CD4-positive, alpha-beta T cell (primary cell): ENCODE measurements at regions of chr20 and their contacts with region 1.

Region 1: DNA sequence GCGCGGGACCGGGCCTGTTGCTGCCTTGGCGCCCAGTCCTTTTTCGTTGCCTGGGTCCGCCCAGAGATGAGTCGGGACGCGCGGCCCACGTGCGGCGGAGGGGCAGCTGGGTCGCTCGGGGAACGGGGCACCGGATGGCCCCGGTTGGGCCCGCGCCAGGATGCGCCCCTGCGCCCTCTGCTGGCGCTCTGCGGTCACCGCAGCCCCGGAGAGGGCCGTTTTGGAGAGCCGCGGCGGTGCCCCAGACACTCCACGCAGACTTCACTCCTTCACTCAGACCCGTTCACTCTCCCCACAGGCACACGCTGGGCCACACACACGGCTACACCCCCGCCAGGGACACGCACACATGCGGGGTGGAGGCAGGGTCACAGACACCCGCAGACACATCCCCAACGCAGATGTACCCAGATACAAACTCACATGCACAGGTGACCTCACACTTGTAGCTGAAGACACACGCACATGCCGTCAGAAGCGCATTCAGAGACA is 38.8 kb downstream of the SRC start:
- DNase-seq: peak; percentile 46 to 87 (median 76)
- ATAC-seq: peak; percentile 96
- H3K4me3 ChIP-seq: peak overlapping the region; percentile 45
- H3K4me3 Mint-ChIP-seq: peak overlapping the region; percentile 89
- H3K27ac ChIP-seq: no peak overlapping the region
- H3K27ac Mint-ChIP-seq: peak overlapping the region; percentile 39
- H3K4me1 ChIP-seq: peaks cover 9% of the 10 kb centered on the region
- H3K4me1 Mint-ChIP-seq: peaks cover 7% of the 10 kb centered on the region
- H3K27me3 ChIP-seq: no peaks in the 10 kb centered on the region
- H3K27me3 Mint-ChIP-seq: no peaks in the 10 kb centered on the region
- CTCF ChIP-seq: peak; percentile 79

Region 2: DNA sequence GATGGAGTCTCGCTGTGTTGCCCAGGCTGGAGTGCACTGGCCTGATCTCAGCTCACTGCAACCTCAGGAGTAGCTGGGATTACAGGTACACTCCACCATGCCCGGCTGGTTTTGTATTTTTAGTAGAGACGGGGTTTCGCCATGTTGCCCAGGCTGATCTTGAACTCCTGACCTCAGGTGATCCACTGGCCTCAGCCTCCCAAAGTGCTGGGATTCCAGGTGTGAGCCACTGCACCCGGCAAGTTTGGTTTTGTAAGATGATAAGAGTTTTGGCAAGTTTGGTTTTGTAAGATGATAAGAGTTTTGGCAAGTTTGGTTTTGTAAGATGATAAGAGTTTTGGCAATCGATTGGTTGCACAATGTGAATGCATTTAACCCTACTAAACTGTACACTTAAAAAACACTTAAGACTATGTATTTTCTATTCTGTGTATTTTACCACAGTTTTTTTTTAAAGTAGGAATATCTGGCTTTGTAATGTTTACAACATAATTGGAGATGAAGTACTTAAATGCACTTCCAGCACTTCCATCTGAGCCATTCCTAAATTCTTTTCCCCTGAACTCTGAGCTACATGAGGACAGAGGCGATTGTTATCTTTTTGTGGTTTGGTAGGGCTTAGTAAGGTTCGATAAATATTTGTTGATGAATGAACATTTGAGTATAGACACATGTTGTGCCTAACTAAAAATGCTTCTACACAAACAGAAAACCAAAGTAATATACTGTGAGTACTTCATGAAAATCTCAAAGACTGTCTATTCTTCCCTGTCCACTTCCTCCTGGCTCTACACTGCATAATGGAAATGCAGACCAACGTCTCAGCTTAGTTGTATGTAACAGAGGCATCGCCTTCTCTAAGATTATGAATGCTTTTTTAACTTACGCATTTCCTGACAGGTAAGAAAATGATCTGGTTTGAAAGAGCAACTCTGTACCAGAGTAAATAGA is 452.0 kb before region 1 on chr20:
- CTCF ChIA-PET with region 1: no interaction called
- POLR2A ChIA-PET with region 1: no interaction called
- intact Hi-C with region 1: no loop called
- DNase-seq: peak in 1 of 14 experiments; percentile 16
- ATAC-seq: no peak
- H3K4me3 ChIP-seq: no peak overlapping the region
- H3K4me3 Mint-ChIP-seq: peak overlapping the region; percentile 37
- H3K27ac ChIP-seq: peak overlapping the region in 1 of 2 donors; percentile 21
- H3K27ac Mint-ChIP-seq: peak overlapping the region; percentile 81
- H3K4me1 ChIP-seq: peaks cover 68% of the 10 kb centered on the region
- H3K4me1 Mint-ChIP-seq: peaks cover 64% of the 10 kb centered on the region
- H3K27me3 ChIP-seq: no peaks in the 10 kb centered on the region
- H3K27me3 Mint-ChIP-seq: no peaks in the 10 kb centered on the region
- CTCF ChIP-seq: no peak

Region 3: DNA sequence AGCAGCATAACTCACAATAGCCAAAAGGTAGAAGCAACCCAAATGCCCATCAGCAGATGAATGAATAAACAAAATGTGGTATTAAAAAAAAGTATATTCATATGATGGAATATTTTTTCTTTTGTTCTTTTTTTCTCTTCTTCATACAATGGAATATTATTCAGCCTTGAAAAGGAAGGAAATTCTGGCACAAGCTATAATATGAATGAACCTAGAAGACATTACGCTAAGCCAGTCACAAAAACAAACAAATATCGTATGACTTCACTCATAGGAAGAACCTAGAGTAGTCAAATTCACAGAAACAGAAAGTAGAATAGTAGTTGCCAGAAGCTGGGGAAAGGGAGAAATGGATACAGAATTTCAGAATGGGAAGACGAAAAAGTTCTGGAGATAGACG is 352.7 kb before region 1 on chr20:
- CTCF ChIA-PET with region 1: no interaction called
- POLR2A ChIA-PET with region 1: no interaction called
- intact Hi-C with region 1: no loop called
- DNase-seq: no peak
- ATAC-seq: no peak
- H3K4me3 ChIP-seq: no peak overlapping the region
- H3K4me3 Mint-ChIP-seq: no peak overlapping the region
- H3K27ac ChIP-seq: no peak overlapping the region
- H3K27ac Mint-ChIP-seq: no peak overlapping the region
- H3K4me1 ChIP-seq: no peaks in the 10 kb centered on the region
- H3K4me1 Mint-ChIP-seq: no peaks in the 10 kb centered on the region
- H3K27me3 ChIP-seq: no peaks in the 10 kb centered on the region
- H3K27me3 Mint-ChIP-seq: no peaks in the 10 kb centered on the region
- CTCF ChIP-seq: no peak

Region 4: DNA sequence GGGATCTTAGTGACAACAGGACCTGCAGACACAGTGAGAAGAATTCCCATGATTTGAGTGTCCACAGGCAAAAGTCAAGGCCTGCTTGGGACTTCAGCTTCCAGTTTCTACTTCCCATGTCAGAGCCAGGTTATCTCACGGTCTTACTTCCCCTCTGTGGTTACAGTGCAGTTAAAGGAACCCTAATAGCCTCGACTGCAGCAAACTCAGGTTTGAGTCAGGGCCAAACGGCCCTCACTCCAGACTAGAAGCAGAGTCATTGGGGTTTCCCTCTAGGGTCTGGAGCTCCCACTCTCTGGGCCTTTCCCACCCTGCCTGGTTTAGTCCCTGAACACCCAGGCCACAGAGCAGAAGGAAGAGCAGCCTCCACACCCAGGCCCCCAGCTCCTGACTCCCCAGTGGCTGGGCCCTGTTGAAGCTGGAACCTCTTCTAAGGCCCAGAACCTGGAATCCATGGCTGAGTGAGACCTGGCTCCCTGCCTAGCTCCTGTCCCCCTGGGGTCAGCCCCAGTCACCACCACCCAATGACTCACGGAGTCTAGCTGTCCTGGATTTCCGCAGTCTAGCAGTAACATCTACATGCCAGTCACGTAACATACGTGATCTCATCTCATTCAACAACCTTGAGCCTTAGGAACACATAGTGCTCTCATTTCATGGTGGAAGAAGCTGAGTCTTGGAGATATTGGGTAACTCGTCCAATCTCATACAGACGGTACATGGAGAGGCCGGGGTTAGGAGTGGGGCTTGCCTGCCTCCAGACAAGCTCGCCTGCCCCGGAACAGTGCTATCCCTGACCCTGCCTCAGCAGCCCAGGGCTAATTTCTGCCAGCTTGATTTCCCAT is 113.9 kb before region 1 on chr20:
- CTCF ChIA-PET with region 1: interaction called, 14 read pairs
- POLR2A ChIA-PET with region 1: no interaction called
- intact Hi-C with region 1: loop called (anchors 1 kb)
- DNase-seq: peak in 2 of 14 experiments; percentile 67 to 77
- ATAC-seq: no peak
- H3K4me3 ChIP-seq: no peak overlapping the region
- H3K4me3 Mint-ChIP-seq: no peak overlapping the region
- H3K27ac ChIP-seq: no peak overlapping the region
- H3K27ac Mint-ChIP-seq: no peak overlapping the region
- H3K4me1 ChIP-seq: peaks cover 3% of the 10 kb centered on the region
- H3K4me1 Mint-ChIP-seq: no peaks in the 10 kb centered on the region
- H3K27me3 ChIP-seq: no peaks in the 10 kb centered on the region
- H3K27me3 Mint-ChIP-seq: no peaks in the 10 kb centered on the region
- CTCF ChIP-seq: no peak

Region 5: DNA sequence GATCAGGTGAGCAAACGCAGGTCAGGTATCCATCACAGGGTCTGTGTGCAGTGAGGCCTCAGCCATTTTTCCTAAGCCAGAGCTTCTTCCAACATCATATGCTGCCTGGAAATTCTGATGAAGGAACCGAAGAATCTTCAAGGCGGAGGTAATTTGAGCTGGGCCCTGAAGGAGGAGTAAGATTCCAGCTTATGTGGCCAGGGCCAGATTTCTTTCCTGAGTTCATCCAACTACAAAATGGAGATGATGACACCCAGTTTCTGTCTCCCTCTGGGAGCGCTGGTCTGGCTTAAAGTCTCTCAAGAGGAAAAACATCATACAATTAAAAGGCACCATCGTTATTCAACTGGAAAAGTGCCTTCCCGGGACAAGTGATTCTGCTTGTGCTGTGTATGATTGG is 102.2 kb before region 1 on chr20:
- CTCF ChIA-PET with region 1: no interaction called
- POLR2A ChIA-PET with region 1: no interaction called
- intact Hi-C with region 1: no loop called
- DNase-seq: no peak
- ATAC-seq: no peak
- H3K4me3 ChIP-seq: no peak overlapping the region
- H3K4me3 Mint-ChIP-seq: no peak overlapping the region
- H3K27ac ChIP-seq: no peak overlapping the region
- H3K27ac Mint-ChIP-seq: no peak overlapping the region
- H3K4me1 ChIP-seq: no peaks in the 10 kb centered on the region
- H3K4me1 Mint-ChIP-seq: no peaks in the 10 kb centered on the region
- H3K27me3 ChIP-seq: no peaks in the 10 kb centered on the region
- H3K27me3 Mint-ChIP-seq: peaks cover 11% of the 10 kb centered on the region
- CTCF ChIP-seq: no peak